A549 (cell line): ENCODE measurements at regions of chr1 and their contacts with region 1.

Region 1: DNA sequence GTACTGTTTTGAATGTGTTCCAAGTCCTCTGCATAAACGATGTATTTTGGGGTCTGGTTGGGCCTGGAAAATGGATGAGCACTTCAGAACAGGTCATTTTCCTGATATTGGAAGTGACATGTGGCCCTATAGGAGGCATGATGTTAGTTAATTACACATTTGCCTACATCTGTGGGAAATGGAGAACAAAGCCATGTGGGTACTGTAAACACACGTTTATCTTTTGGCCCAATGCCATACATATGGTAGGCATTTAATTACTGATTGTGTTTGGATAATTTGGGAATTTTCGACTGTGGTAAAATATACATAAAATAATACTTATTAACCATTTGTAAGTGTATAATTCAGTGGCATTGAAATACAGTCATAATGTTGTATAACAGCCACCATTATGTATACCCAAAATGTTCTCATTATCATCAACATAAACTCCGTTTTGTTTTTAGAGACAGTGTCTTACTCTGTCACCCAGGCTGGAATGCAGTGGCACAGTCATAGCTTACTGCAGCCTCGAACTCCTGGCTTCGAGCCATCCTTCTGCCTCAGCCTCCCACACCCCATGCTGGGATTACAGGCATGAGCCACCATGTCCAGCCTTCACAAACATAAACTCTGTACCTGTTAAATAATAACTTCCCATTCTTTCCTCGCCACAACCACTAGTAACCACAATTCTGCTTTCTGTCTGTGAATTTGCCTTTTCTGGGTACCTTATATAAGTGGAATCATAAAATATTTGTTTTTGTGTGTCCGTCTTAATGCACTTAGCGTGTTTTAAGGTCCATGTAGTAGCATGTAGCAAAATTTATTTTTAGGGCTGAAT is 11.9 kb upstream of the RNPEP start:
- DNase-seq: no peak
- ATAC-seq: no peak
- H3K4me3 ChIP-seq: no peak overlapping the region
- H3K27ac ChIP-seq: no peak overlapping the region
- H3K4me1 ChIP-seq: no peaks in the 10 kb centered on the region
- CTCF ChIP-seq: no peak
- EP300 ChIP-seq: no peak
- POLR2A ChIP-seq: no peak
- RAD21 ChIP-seq: no peak

Region 2: GRCh38 chr1:201888282-201889089 is 82.1 kb before region 1 on chr1 and contains the start of gene SHISA4:
- CTCF ChIA-PET with region 1: interaction called, 855 read pairs
- POLR2A ChIA-PET with region 1: no interaction called
- DNase-seq: peak; percentile 75 to 86
- ATAC-seq: peak; percentile 86 to 93
- H3K4me3 ChIP-seq: peak within 1 kb of the TSS; percentile 67
- H3K27ac ChIP-seq: peak within 1 kb of the TSS; percentile 81 to 94
- H3K4me1 ChIP-seq: peaks cover 36% of the 10 kb centered on the region
- CTCF ChIP-seq: no peak
- EP300 ChIP-seq: no peak
- POLR2A ChIP-seq: peak; percentile 79
- RAD21 ChIP-seq: no peak
- polyA plus RNA-seq, gene SHISA4: 10.0 and 13.8 TPM in 2 replicates

Region 3: GRCh38 chr1:201916649-201917249 is 53.8 kb before region 1 on chr1:
- CTCF ChIA-PET with region 1: interaction called, 16 read pairs
- POLR2A ChIA-PET with region 1: no interaction called
- DNase-seq: peak; percentile 67 to 85
- ATAC-seq: peak; percentile 85 to 86
- H3K4me3 ChIP-seq: no peak overlapping the region
- H3K27ac ChIP-seq: peak overlapping the region; percentile 73 to 82
- H3K4me1 ChIP-seq: peaks cover 26% of the 10 kb centered on the region
- CTCF ChIP-seq: no peak
- EP300 ChIP-seq: peak; percentile 49 to 72; a peak in 3 of 5 replicates
- POLR2A ChIP-seq: no peak
- RAD21 ChIP-seq: peak in 1 of 2 experiments; percentile 31; a peak in 2 of 5 replicates

Region 4: GRCh38 chr1:201955009-201955728 is 15.4 kb before region 1 on chr1 and contains the start of gene TIMM17A:
- CTCF ChIA-PET with region 1: interaction called, 21 read pairs
- POLR2A ChIA-PET with region 1: interaction called, 8 read pairs
- DNase-seq: peak; percentile 93 to 98
- ATAC-seq: peak; percentile 100
- H3K4me3 ChIP-seq: peak within 1 kb of the TSS; percentile 96
- H3K27ac ChIP-seq: peak within 1 kb of the TSS; percentile 91 to 93
- H3K4me1 ChIP-seq: peaks cover 12% of the 10 kb centered on the region; the same call in 2 of the 3 replicates
- CTCF ChIP-seq: no peak
- EP300 ChIP-seq: no peak
- POLR2A ChIP-seq: peak; percentile 83
- RAD21 ChIP-seq: no peak
- polyA plus RNA-seq, gene TIMM17A: 96.2 and 127 TPM in 2 replicates

Region 5: DNA sequence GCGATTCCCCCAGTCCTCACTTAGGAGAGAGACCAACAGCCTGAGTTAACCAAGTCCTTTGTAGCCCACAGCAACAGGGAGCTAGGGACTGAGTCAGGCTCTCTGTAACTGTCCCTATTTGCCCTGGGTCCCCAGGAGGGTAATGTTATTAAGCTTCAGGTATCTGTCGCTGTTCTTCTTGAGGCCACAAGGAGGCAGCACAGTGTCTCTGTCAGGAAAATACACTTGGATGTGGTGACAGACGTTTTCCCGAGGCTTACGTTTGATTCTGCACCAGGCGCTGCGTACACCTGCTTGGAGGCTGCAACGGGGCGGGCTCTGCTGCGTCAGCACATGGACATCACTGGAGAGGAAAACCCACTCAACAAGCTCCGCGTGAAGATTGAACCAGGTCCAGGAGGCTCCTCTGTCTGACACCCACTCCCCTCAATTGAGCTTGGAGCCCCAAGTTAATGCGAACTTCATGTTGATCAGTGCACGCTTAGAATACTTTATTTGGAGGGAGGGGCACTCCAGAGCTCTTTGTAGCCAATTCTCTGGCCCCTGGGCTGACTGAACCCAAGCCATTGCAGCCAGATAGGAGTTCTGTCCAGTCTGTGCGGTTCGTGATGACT is 29.2 kb after region 1 on chr1:
- CTCF ChIA-PET with region 1: interaction called, 23 read pairs
- POLR2A ChIA-PET with region 1: no interaction called
- DNase-seq: peak; percentile 83 to 89
- ATAC-seq: peak; percentile 70 to 86; a peak in 5 of 6 replicates
- H3K4me3 ChIP-seq: no peak overlapping the region
- H3K27ac ChIP-seq: no peak overlapping the region
- H3K4me1 ChIP-seq: no peaks in the 10 kb centered on the region
- CTCF ChIP-seq: peak; percentile 80
- EP300 ChIP-seq: no peak
- POLR2A ChIP-seq: no peak
- RAD21 ChIP-seq: peak; percentile 72 to 81

Region 6: GRCh38 chr1:202018468-202019255 is 48.1 kb after region 1 on chr1:
- CTCF ChIA-PET with region 1: no interaction called
- POLR2A ChIA-PET with region 1: no interaction called
- DNase-seq: peak; percentile 81 to 99
- ATAC-seq: peak; percentile 71
- H3K4me3 ChIP-seq: peak overlapping the region; percentile 23; the same call in 2 of the 3 replicates
- H3K27ac ChIP-seq: peak overlapping the region; percentile 93 to 94
- H3K4me1 ChIP-seq: peaks cover 91% of the 10 kb centered on the region
- CTCF ChIP-seq: no peak
- EP300 ChIP-seq: peak; percentile 89 to 90; a peak in 3 of 5 replicates
- POLR2A ChIP-seq: no peak
- RAD21 ChIP-seq: peak; percentile 26 to 68; a peak in 4 of 5 replicates

Region 7: DNA sequence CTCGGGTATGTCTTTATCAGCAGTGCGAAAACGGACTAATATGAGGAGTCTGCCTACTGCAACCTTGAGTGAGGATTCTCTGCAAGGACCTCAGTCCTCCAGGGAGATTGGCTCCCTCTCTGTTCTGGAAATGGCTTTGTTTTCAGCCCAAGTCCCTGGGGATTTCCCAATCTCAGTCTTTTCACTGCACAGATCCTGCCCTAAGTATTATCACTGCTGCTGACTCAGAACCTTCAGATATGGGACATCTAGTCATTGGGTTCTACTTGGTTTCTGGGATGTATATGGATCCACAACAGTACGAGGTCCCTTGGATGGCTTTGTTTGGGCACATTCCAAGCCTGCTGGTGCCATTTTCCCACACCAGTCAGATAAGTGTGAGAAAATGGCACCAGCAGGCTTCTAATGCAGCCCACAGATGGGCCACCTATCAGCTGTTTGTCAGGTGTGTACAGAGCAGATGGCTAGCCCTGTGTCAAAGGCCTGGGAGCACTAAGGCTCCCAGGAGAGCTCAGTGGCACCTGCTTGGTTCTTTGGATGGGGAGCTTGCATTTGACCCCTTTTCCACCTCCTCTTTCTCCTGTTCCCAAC is 67.3 kb after region 1 on chr1:
- CTCF ChIA-PET with region 1: no interaction called
- POLR2A ChIA-PET with region 1: no interaction called
- DNase-seq: peak in 1 of 2 experiments; percentile 59
- ATAC-seq: no peak
- H3K4me3 ChIP-seq: no peak overlapping the region
- H3K27ac ChIP-seq: peak overlapping the region; percentile 97 to 99
- H3K4me1 ChIP-seq: peaks cover 48% of the 10 kb centered on the region
- CTCF ChIP-seq: no peak
- EP300 ChIP-seq: no peak
- POLR2A ChIP-seq: no peak
- RAD21 ChIP-seq: no peak